Activated naive CD4-positive, alpha-beta T cell treated with anti-CD3 and anti-CD28 coated beads for 36 hours (primary cell): ENCODE measurements at regions of chr21 and their contacts with region 1.

Region 1: GRCh38 chr21:25535849-25536248 is 71.4 kb downstream of the MRPL39 start:
- DNase-seq: no peak
- H3K4me3 Mint-ChIP-seq: no peak overlapping the region
- H3K27ac Mint-ChIP-seq: no peak overlapping the region
- H3K4me1 Mint-ChIP-seq: peaks cover 3% of the 10 kb centered on the region
- H3K27me3 Mint-ChIP-seq: no peaks in the 10 kb centered on the region

Region 2: GRCh38 chr21:25556091-25556490 is 20.2 kb after region 1 on chr21:
- CTCF ChIA-PET with region 1: interaction called, 3 read pairs
- intact Hi-C with region 1: loop called (anchors 2 kb)
- DNase-seq: no peak
- H3K4me3 Mint-ChIP-seq: no peak overlapping the region
- H3K27ac Mint-ChIP-seq: peak overlapping the region; percentile 70
- H3K4me1 Mint-ChIP-seq: peaks cover 63% of the 10 kb centered on the region
- H3K27me3 Mint-ChIP-seq: no peaks in the 10 kb centered on the region